Colonic mucosa (tissue), 4 donors: ENCODE measurements at regions of chr5 and their contacts with region 1.

Region 1: GRCh38 chr5:150441813-150442698 is 7.5 kb downstream of the RPS14 start:
- DNase-seq: no peak
- H3K4me3 ChIP-seq: no peak overlapping the region
- H3K27ac ChIP-seq: no peak overlapping the region
- H3K4me1 ChIP-seq: no peaks in the 10 kb centered on the region
- H3K27me3 ChIP-seq: no peaks in the 10 kb centered on the region
- CTCF ChIP-seq: no peak

Region 2: GRCh38 chr5:150357326-150358260 is 84.5 kb before region 1 on chr5 and contains the start of gene TCOF1:
- intact Hi-C with region 1: loop called (anchors 5 kb)
- DNase-seq: peak; percentile 99
- H3K4me3 ChIP-seq: peak within 1 kb of the TSS; percentile 89
- H3K27ac ChIP-seq: peak within 1 kb of the TSS; percentile 47
- H3K4me1 ChIP-seq: peaks cover 9% of the 10 kb centered on the region
- H3K27me3 ChIP-seq: no peaks in the 10 kb centered on the region
- CTCF ChIP-seq: no peak
- total RNA-seq, gene TCOF1: 17.3 to 68.5 TPM